ENCODE measurements at regions of chr14 and their contacts with region 1.

Region 1: DNA sequence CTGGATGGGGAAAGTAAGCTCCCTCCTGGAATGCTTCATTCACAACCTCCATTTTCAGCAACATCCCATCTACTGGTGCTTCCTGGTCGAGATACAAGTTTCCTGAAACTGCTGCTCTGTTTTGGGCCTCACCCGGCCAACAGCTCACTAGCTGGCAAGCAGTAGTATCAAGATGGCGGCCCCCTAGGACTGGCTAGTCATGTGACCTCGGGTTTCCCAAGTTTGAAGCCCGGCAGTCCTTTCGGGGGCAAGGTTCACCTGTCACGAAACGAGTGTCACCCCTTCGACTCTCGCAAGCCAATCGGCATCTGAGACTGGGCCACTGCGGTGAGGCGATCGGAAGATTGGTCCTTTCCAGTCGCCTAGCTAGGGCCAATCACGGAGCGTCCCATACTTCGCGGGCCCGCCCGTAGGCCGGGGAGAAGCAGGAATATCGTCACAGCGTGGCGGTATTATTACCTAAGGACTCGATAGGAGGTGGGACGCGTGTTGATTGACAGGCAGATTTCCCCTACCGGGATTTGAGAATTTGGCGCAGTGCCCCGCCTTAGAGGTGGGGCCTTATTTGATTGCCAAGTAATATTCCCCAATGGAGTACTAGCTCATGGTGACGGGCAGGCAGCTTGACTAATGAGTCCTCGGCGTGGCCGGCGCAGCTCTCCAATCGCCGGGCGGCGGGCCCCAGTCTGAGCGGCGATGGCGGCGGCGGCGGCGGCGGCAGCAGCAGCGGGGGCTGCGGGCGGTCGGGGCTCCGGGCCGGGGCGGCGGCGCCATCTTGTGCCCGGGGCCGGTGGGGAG is at the start of gene PABPN1:
- DNase-seq: peak; percentile 100
- H3K4me3 ChIP-seq: peak within 1 kb of the TSS; percentile 96
- H3K27ac ChIP-seq: peak within 1 kb of the TSS; percentile 93
- H3K4me1 ChIP-seq: no peaks in the 10 kb centered on the region
- H3K27me3 ChIP-seq: no peaks in the 10 kb centered on the region
- CTCF ChIP-seq: no peak
- total RNA-seq, gene PABPN1: 122 to 197 TPM

Region 2: DNA sequence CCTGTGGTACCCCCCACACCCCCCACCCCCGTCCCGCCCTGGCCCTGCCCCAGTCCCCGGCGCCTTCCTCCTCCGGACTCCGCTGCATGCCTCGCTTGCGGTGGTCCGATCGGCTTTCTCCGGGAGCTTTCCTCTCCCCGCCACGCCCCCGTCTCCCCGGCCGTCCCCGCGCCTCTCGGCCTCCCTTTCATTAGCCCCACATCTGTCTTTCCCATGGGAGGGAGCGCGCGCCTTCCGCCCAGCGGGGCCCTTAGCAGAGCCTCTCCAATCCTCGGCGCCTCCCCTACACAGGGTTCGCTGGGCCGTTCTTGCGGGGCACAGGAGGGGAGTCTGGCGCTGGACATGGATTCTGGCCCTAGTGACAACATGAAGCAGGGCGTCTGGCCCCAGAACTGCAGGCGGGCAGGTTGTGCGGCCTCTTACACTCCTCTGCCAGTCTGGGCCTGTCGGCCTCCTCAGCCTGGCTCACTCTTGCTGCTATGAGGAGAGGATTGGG is 45.5 kb after region 1 on chr14:
- intact Hi-C with region 1: no loop called
- DNase-seq: peak; percentile 46
- H3K4me3 ChIP-seq: no peak overlapping the region
- H3K27ac ChIP-seq: peak overlapping the region; percentile 82
- H3K4me1 ChIP-seq: no peaks in the 10 kb centered on the region
- H3K27me3 ChIP-seq: peaks cover 22% of the 10 kb centered on the region
- CTCF ChIP-seq: no peak

Region 3: DNA sequence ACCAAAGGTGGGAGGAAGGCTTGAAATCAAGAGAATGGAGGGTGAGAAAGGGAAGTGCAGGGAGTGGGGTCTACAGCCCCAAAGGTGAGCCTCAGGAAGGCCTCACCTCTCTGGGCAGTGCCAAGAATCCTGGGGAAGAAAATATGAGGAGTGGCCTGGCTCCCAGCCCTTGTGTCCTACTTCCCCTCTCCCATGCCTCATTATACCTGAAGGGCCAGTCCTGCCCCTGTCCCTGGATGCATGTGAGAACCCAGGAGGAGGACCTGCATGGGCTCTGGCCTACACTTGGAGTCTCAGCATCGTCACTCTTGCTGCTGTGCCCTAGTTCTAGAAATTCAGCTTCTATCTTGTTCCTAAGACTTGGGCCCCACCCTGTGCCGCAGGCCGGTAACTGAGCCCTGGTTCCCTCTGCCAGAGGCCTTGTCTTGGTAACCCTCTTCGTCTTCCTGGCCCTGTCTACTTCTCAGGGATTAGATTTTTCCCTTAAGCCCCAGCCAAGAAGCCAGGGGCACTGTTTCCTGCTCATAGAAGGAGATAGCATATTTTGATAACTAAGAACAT is 125.4 kb after region 1 on chr14:
- intact Hi-C with region 1: loop called (anchors 10 kb)
- DNase-seq: peak; percentile 59
- H3K4me3 ChIP-seq: no peak overlapping the region
- H3K27ac ChIP-seq: peak overlapping the region; percentile 69
- H3K4me1 ChIP-seq: no peaks in the 10 kb centered on the region
- H3K27me3 ChIP-seq: no peaks in the 10 kb centered on the region
- CTCF ChIP-seq: peak; percentile 12

Region 4: DNA sequence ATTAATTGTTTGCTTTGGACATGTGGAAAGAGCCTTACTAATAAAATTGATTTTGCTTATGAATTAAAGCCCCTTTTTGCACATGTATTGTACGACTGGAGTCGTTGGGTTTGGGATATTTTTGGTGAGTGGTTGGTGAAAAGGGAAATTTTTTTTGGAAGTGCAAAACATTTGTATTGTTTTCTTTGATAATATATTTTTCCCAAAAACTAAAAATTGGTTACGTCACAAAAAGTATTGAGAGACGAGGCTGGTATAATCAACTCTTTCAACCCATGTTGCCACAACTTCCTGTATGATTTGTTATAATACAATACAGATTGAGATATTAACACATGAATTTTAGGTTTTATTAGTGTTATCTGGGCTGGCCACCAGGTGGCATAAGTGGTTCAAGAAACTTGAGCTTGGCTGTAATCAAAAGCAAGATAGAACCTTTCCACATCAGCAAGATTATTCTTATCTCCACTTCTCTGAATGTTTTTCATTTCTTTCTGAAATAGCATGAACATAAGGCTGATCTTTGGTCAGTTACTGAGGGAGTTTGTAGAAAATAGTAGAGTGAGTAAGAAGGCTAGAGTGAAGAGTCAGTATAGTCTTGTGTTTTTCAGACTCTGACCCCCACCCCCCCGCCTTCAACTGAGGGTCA is 157.3 kb after region 1 on chr14:
- intact Hi-C with region 1: loop called (anchors 10 kb)
- DNase-seq: peak; percentile 62
- H3K4me3 ChIP-seq: no peak overlapping the region
- H3K27ac ChIP-seq: no peak overlapping the region
- H3K4me1 ChIP-seq: no peaks in the 10 kb centered on the region
- H3K27me3 ChIP-seq: no peaks in the 10 kb centered on the region
- CTCF ChIP-seq: peak; percentile 61

Region 5: DNA sequence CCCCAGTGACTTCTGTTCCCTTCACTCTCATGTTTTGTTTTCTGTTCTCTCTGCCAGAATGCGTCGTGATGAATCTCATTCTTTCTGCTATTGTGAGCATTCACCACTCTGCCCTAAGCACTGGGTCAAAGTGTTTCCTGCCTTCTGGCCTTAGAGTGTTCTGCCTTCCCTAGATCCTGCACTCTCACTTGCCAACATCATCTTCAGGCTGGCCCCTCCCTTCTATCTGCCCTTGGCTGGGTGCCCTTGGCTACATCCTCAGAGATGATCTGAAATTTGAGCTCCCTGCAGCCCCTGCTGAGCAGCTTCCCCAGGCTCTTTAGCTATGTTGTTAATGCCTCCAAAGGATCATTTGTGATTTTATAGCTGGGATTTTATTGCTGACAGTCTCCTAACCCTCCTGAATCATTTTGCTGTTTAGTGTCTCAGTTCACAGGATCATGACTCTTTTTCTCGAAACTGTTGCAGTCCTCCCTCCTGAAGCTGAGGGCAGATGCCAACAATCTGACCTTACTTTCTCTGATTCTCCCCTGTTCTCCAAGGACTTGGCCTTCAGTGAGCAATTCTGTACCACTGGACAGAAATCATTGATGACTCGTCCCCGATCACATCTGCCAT is 319.7 kb after region 1 on chr14:
- intact Hi-C with region 1: no loop called
- DNase-seq: peak; percentile 47
- H3K4me3 ChIP-seq: no peak overlapping the region
- H3K27ac ChIP-seq: no peak overlapping the region
- H3K4me1 ChIP-seq: no peaks in the 10 kb centered on the region
- H3K27me3 ChIP-seq: no peaks in the 10 kb centered on the region
- CTCF ChIP-seq: no peak